Mammary epithelial cell (primary cell): ENCODE measurements at regions of chr10 and their contacts with region 1.

Region 1: DNA sequence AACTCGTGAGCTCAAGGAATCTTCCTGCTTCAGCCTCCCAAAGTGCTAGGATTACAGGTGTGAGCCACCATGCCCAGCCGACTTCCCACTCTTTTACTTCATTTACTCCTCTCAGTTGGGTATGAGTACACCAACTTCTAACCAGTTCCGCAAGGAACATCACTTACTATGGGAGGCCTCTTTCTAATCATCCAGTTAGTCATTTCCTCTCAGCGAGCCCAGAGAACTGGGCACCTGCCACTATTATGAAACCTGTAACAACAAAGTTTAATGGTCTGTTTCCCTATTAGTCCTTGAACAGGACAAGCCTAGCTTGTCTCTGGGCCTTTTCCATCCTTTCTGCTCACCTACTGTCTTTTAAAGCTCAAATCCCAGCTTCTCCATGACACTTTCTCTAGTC is 88.8 kb downstream of the DNMBP start:
- DNase-seq: peak; percentile 87
- H3K4me3 ChIP-seq: no peak overlapping the region
- H3K27ac ChIP-seq: peak overlapping the region; percentile 51
- H3K4me1 ChIP-seq: peaks cover 40% of the 10 kb centered on the region
- H3K27me3 ChIP-seq: no peaks in the 10 kb centered on the region
- CTCF ChIP-seq: no peak

Region 2: DNA sequence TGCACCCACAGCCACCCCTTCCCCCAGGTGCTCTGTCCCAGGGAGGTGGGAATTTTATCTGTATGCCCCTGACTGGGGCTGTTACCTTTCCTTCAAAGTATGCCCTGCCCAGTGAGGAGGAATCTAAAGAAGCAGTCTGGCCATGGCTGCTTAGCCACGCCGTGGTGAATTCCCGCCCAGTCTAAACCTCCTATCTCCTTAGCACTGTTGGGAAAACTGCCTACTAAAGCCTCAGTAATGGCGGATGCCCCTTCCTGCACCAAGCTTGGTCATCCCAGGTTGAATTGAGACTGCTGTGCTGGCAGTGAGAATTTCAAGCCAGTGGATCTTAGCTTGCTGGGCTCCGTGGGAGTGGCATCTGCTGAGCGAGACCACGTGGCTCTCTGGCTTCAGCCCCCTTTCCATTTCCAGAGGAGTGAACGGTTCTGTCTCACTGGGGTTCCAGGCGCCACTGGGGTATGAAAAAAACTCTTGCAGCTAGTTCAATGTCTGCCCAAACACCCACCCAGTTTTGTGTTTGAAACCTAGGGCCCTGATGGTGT is 51.2 kb before region 1 on chr10:
- CTCF ChIA-PET with region 1: no interaction called
- dilution Hi-C with region 1: loop called (anchors 5 kb)
- in situ Hi-C with region 1: no loop called
- intact Hi-C with region 1: no loop called
- DNase-seq: no peak
- H3K4me3 ChIP-seq: no peak overlapping the region
- H3K27ac ChIP-seq: no peak overlapping the region
- H3K4me1 ChIP-seq: no peaks in the 10 kb centered on the region
- H3K27me3 ChIP-seq: no peaks in the 10 kb centered on the region
- CTCF ChIP-seq: no peak

Region 3: DNA sequence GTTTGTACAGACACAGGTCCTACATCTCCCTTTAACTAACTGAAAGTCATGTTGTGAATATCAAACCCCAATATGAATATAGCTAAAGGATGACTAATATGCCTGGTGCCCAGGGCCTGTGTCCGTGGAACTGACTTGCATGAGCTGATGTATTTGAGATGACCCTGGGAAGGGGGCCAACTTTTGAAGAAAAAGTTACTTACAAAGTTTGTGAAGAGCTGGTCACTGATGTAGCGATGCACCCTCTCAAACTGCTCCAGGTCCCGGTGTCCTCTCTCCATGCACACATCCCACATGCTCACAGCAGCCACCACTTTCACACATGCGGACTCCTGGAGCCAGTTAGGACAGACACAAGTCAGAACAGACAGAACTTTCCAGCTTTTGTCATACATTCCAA is 32.3 kb before region 1 on chr10:
- CTCF ChIA-PET with region 1: no interaction called
- dilution Hi-C with region 1: no loop called
- in situ Hi-C with region 1: no loop called
- intact Hi-C with region 1: no loop called
- DNase-seq: no peak
- H3K4me3 ChIP-seq: no peak overlapping the region
- H3K27ac ChIP-seq: no peak overlapping the region
- H3K4me1 ChIP-seq: no peaks in the 10 kb centered on the region
- H3K27me3 ChIP-seq: no peaks in the 10 kb centered on the region
- CTCF ChIP-seq: no peak

Region 4: GRCh38 chr10:99945263-99945662 is 24.4 kb after region 1 on chr10:
- CTCF ChIA-PET with region 1: no interaction called
- dilution Hi-C with region 1: no loop called
- in situ Hi-C with region 1: no loop called
- intact Hi-C with region 1: loop called (anchors 1 kb)
- DNase-seq: peak; percentile 50
- H3K4me3 ChIP-seq: no peak overlapping the region
- H3K27ac ChIP-seq: peak overlapping the region; percentile 82
- H3K4me1 ChIP-seq: peaks cover 13% of the 10 kb centered on the region
- H3K27me3 ChIP-seq: no peaks in the 10 kb centered on the region
- CTCF ChIP-seq: no peak